CD8-positive, alpha-beta memory T cell (primary cell): ENCODE measurements at regions of chr19 and their contacts with region 1.

Region 1: DNA sequence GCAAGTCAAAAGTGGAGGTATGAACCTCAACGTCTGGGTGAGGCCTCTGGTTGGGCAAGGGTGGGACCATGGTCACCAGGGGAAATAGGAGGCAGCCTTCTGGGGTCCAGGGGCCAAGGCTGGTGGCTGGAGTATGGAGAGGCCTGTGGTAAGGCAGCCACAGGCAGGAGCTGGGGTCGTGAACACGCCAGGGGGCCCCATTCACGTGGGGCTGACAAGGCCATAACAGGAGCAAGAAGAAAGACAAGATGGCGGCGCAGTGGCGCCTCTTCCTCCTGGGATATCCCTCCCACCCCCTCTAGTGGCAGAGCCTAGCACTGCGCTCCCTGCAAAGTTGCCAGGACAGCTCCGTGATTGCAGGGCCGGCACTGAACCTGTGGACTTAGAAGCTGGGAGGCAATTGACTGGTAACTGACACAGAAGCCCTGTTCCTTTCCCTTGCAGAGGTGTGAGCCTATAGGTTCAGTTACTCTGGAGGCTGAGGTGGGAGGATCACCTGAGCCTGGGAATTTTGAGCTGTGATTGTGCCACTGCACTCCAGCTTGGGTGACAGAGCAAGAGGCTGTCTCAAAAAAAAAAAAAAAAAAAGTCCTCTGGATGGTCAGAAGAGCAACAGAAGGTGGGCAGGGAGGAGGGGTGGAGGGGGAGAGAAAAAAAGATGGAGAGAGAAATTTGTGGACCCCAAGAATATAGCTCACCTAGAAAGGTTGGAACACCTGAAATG is 19.7 kb upstream of the EDDM13 start:
- DNase-seq: peak; percentile 27 to 77 (median 47)
- H3K4me3 ChIP-seq: no peak overlapping the region
- H3K4me3 Mint-ChIP-seq: peak overlapping the region in 1 of 7 donors; percentile 27
- H3K27ac ChIP-seq: no peak overlapping the region
- H3K27ac Mint-ChIP-seq: no peak overlapping the region
- H3K4me1 ChIP-seq: no peaks in the 10 kb centered on the region
- H3K4me1 Mint-ChIP-seq: peaks cover 0 to 4% (median 0%) of the 10 kb centered on the region in 3 donors
- H3K27me3 ChIP-seq: no peaks in the 10 kb centered on the region
- H3K27me3 Mint-ChIP-seq: peaks cover 0 to 3% of the 10 kb centered on the region in 2 donors

Region 2: DNA sequence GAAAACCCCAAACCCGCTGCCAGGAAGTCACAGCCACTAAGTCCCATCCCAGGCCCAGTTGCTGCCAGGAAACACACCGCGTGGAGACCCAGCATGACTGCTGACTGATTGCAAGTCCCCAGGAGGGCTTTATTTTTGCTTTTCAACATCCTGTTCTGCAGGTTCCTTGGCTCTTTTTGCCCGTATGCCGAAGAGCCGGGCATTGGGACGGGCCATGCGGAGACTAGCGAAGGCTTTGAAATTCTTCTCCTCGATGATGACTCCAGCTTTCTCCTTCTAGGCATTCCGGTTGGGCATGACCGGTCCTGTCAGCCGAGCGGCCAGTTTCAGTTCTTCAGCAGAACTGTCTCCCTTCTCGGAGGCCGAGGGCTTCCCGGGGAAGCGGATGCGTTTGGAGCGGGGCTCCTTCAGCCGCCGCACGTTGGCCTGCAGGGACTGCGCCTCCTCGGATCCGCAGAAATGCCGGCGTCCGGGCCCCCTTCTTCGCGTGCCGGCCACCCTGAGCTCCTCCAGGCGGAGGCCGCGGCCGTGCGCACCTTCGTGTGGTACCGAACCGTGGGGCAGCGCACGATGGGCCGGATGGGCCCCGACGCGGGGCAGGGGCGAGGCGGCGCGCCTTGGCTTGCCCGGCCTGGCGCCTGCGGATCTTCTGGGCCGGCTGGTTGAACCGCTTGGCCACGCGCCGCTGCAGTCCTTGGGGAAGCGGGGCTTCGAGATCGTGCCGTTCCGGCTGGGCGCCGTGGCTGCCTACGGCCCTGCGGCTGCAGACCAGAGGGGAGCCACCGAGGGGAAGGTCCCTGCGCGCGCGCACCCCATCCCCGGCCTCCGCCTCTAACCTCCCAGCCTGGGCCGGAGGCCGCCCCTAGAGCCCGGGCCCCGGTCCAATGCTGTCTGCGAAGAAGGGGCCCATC is 35.6 kb before region 1 on chr19:
- CTCF ChIA-PET with region 1: no interaction called
- POLR2A ChIA-PET with region 1: no interaction called
- DNase-seq: no peak
- H3K4me3 ChIP-seq: no peak overlapping the region
- H3K4me3 Mint-ChIP-seq: no peak overlapping the region
- H3K27ac ChIP-seq: no peak overlapping the region
- H3K27ac Mint-ChIP-seq: no peak overlapping the region
- H3K4me1 ChIP-seq: no peaks in the 10 kb centered on the region
- H3K4me1 Mint-ChIP-seq: peaks cover 0 to 4% (median 2%) of the 10 kb centered on the region in 3 donors
- H3K27me3 ChIP-seq: no peaks in the 10 kb centered on the region
- H3K27me3 Mint-ChIP-seq: peaks cover 20 to 33% of the 10 kb centered on the region in 2 donors

Region 3: GRCh38 chr19:56333505-56333904 is 80.6 kb after region 1 on chr19:
- CTCF ChIA-PET with region 1: interaction called, 27 read pairs
- POLR2A ChIA-PET with region 1: no interaction called
- DNase-seq: peak in 3 of 5 donors; percentile 16 to 28 (median 21)
- H3K4me3 ChIP-seq: no peak overlapping the region
- H3K4me3 Mint-ChIP-seq: no peak overlapping the region
- H3K27ac ChIP-seq: no peak overlapping the region
- H3K27ac Mint-ChIP-seq: no peak overlapping the region
- H3K4me1 ChIP-seq: no peaks in the 10 kb centered on the region
- H3K4me1 Mint-ChIP-seq: no peaks in the 10 kb centered on the region
- H3K27me3 ChIP-seq: no peaks in the 10 kb centered on the region
- H3K27me3 Mint-ChIP-seq: peaks cover 3 to 14% of the 10 kb centered on the region in 2 donors